Activated CD8-positive, alpha-beta memory T cell treated with anti-CD3 and anti-CD28 coated beads, Interleukin-2, amount 10 ng/mL, durations not matched to agents 7 days and 5 days (primary cell): ENCODE measurements at regions of chr15 and their contacts with region 1.

Region 1: DNA sequence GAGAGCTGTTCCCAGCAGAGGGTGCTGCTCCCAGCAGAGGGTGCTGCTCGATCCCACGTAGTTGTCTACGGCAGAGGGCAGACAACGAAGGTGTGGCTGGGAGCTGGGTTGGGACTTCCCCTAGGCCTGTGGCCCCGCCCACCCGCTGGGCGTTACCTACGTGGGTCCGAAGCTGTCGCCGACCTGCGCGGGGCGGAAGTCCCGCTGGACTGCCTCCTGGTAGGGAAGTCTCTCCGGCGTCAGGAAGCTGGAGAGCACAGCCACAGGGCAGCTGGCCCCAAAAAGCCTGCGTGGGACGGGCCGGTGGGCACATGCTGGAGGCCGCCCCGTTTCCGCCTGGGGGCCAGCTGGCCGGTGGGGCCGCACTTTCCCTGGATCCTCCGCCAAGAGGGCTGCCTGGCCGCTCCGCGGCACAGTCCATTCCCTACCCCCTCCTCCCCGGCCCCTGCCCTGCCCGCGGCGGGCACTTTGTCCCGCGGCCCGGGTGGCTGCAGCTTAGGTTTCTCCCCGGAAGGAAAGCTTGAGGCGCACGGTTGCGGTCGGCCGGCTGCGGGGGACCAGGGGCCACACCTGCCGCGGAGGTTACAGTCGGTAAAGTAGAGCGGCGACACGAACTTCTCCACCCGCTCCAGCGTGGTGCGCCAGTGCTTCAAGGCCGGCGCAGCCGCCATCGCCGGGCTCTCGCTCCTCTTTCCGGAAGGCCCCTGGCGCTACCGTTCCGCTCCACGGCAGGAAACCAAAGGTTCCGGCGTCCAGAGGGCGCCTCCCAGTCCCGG is at the start of gene MAN2C1:
- DNase-seq: peak; percentile 96
- ATAC-seq: peak; percentile 95
- H3K4me3 Mint-ChIP-seq: peak within 1 kb of the TSS; percentile 79
- H3K27ac Mint-ChIP-seq: peak within 1 kb of the TSS; percentile 90
- H3K4me1 Mint-ChIP-seq: peaks cover 29% of the 10 kb centered on the region
- H3K27me3 Mint-ChIP-seq: no peaks in the 10 kb centered on the region
- total RNA-seq, gene MAN2C1: 143 to 170 TPM

Region 2: DNA sequence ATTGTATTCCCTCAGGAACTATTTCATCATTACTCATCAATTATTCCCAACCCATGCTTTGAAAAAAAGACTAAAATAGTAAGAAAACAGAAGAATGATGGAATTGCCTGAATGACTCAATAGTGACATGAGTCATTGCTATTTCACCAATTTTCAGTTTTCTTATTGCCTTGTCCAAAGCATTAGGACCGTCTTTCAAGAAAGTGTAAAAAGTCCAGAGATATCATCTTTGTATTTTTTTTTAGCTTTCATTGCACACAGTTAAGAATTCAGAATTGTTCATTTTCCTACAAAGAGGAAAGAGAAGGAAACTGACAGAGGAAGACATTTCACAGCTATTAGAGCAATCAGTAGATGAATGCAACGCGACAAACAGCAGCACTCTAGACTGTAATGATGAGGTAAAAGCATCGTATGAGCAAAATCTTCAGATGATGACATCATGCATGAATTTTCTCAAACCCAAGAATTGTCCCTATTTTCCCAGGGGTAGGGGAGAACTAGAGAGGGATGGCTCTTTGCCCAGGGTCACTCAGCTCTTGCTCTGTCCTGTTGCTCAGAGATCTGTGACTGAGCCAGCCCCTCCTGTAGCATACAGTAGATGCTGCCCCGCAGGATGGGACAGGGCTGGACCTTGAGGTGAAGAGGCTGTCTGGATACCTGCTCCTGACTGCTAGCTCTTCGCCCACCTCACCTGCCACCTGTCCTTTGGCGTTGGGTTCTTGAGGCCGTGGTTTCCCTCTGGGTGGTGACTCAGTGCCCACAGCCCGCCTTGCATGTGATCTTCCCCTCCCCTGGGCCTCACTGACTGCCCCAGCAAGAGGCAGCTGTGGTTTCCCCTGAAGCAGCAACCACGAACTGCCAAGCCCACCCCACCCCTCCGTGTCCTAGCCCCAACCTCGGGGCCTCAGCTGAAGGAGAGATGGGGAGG is 259.9 kb before region 1 on chr15:
- CTCF ChIA-PET with region 1: no interaction called
- DNase-seq: peak; percentile 92
- ATAC-seq: peak; percentile 84
- H3K4me3 Mint-ChIP-seq: no peak overlapping the region
- H3K27ac Mint-ChIP-seq: peak overlapping the region; percentile 79
- H3K4me1 Mint-ChIP-seq: peaks cover 58% of the 10 kb centered on the region
- H3K27me3 Mint-ChIP-seq: peaks cover 18% of the 10 kb centered on the region

Region 3: DNA sequence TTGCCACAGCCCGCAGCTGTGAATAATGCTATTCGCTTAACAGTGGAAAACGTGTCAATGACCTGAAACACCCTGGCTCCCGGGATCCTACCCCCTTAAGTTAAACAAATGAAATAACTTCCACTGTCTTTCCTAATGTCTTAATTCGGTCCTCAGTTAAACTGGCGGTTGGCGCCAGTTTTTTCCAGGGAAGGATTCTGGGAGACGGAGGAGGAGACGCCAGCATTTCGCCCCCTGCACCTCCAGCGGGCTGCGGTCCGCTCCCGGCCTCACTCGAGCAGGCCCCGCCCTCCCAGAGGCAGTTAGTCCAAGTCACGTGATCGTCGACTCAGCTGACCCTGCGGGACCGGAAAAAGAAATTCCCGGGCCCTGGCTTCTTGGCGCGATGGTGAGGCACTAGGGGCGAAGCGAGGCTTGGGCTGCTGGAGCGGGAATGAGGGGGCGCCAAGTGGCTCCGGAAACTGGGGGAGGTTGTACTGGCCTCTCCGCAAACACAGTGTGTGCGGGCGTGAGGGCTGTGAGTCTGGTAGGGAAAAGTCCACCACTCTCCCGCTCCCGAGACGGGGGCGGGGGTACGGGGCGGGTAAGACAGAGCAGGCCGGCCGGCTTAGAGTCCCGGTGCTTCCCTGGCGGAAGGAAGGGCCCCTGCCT is 32.3 kb before region 1 on chr15 and contains the start of gene COMMD4:
- CTCF ChIA-PET with region 1: interaction called, 11 read pairs
- DNase-seq: peak; percentile 92
- ATAC-seq: peak; percentile 85
- H3K4me3 Mint-ChIP-seq: peak within 1 kb of the TSS; percentile 91
- H3K27ac Mint-ChIP-seq: peak within 1 kb of the TSS; percentile 92
- H3K4me1 Mint-ChIP-seq: peaks cover 21% of the 10 kb centered on the region
- H3K27me3 Mint-ChIP-seq: peaks cover 3% of the 10 kb centered on the region
- total RNA-seq, gene COMMD4: 76.6 to 80.7 TPM

Region 4: DNA sequence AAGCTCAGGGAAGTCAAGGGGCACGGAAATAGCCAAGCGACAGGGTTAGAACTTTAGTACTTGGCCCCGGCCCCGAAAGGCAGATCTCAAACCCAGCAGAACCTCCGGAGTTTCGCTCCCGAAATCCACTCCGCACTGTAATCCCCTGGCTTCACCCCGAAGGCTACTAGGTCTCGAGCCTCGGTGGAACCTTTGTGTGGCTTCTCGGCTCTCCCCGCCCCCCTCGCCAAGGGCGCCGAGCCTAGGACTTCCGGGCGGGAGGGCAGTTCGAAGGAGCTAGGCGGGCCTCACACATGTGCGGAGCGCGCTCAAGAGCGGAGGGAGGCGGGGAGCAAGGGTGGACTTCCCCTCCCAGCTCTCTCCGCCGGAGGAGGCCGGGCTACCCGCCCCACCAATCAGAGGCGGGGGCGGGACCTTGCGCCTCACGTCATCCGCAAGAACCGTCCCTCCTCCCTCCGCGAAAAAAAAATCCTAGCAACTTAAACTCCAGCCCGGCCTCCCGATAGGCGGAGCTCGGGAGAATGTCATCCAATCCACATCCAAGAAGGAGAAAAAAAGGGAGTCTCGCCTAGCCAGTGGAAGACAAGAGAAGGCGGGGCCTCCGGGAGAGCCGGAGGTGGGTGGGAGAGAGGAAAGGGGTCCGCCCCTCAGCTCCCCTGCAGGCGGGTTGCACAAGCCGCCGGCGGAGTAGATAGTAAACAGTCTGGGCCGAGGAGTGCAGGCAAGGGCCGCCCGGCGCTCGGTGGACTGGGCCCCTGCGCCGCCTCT is 85.8 kb after region 1 on chr15:
- CTCF ChIA-PET with region 1: interaction called, 59 read pairs
- DNase-seq: peak; percentile 99
- ATAC-seq: peak; percentile 50
- H3K4me3 Mint-ChIP-seq: peak overlapping the region; percentile 98
- H3K27ac Mint-ChIP-seq: peak overlapping the region; percentile 98
- H3K4me1 Mint-ChIP-seq: peaks cover 28% of the 10 kb centered on the region
- H3K27me3 Mint-ChIP-seq: no peaks in the 10 kb centered on the region

Region 5: GRCh38 chr15:75647370-75648155 is 279.5 kb after region 1 on chr15 and contains the start of gene SNX33:
- CTCF ChIA-PET with region 1: interaction called, 68 read pairs
- DNase-seq: peak; percentile 72
- ATAC-seq: peak; percentile 72
- H3K4me3 Mint-ChIP-seq: peak within 1 kb of the TSS; percentile 76
- H3K27ac Mint-ChIP-seq: no peak within 1 kb of the TSS
- H3K4me1 Mint-ChIP-seq: peaks cover 26% of the 10 kb centered on the region
- H3K27me3 Mint-ChIP-seq: peaks cover 19% of the 10 kb centered on the region
- total RNA-seq, gene SNX33: 1.4 to 3.5 TPM

Region 6: DNA sequence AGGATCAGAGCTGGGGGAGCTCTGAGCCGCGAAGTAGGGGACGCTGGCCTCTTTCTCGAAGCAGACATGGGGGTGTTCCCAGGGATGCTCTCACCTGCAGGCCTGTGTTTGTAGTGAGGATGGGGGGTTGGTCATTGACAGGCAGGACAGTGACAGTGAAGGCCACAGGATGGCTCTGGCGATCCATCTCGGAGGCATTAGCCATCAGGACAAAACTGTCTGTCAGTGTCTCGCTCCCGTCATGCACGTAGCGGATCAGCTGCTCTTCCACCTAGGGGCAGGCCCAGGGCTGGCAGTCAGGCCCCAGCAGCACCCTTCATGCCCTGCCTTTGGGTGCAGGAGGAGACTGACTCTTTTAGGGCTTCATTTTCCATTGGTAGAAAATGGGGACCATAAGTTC is 316.5 kb after region 1 on chr15:
- CTCF ChIA-PET with region 1: interaction called, 34 read pairs
- DNase-seq: no peak
- ATAC-seq: no peak
- H3K4me3 Mint-ChIP-seq: no peak overlapping the region
- H3K27ac Mint-ChIP-seq: no peak overlapping the region
- H3K4me1 Mint-ChIP-seq: no peaks in the 10 kb centered on the region
- H3K27me3 Mint-ChIP-seq: no peaks in the 10 kb centered on the region